ENCODE measurements at regions of chr5 and their contacts with region 1.

Region 1: GRCh38 chr5:180333661-180334060 is 19.5 kb downstream of the GFPT2 start:
- DNase-seq: peak; percentile 85
- ATAC-seq: peak; percentile 67
- H3K4me3 ChIP-seq: no peak overlapping the region
- H3K27ac ChIP-seq: peak overlapping the region; percentile 91
- H3K4me1 ChIP-seq: peaks cover 43% of the 10 kb centered on the region
- H3K27me3 ChIP-seq: no peaks in the 10 kb centered on the region
- CTCF ChIP-seq: no peak

Region 2: GRCh38 chr5:180353048-180353979 is 19.7 kb after region 1 on chr5 and contains the start of gene GFPT2:
- CTCF ChIA-PET with region 1: interaction called, 3 read pairs
- POLR2A ChIA-PET with region 1: interaction called, 3 read pairs
- intact Hi-C with region 1: loop called (anchors 1 kb)
- DNase-seq: peak; percentile 77
- ATAC-seq: peak; percentile 74
- H3K4me3 ChIP-seq: peak within 1 kb of the TSS; percentile 76
- H3K27ac ChIP-seq: no peak within 1 kb of the TSS
- H3K4me1 ChIP-seq: peaks cover 10% of the 10 kb centered on the region
- H3K27me3 ChIP-seq: no peaks in the 10 kb centered on the region
- CTCF ChIP-seq: no peak
- total RNA-seq, gene GFPT2: 2.2 and 5.9 TPM in 2 replicates

Region 3: GRCh38 chr5:180380856-180381255 is 47.2 kb after region 1 on chr5:
- CTCF ChIA-PET with region 1: no interaction called
- POLR2A ChIA-PET with region 1: no interaction called
- intact Hi-C with region 1: no loop called
- DNase-seq: no peak
- ATAC-seq: no peak
- H3K4me3 ChIP-seq: no peak overlapping the region
- H3K27ac ChIP-seq: no peak overlapping the region
- H3K4me1 ChIP-seq: no peaks in the 10 kb centered on the region
- H3K27me3 ChIP-seq: no peaks in the 10 kb centered on the region
- CTCF ChIP-seq: no peak